Esophagus muscularis mucosa (tissue), 4 donors: ENCODE measurements at regions of chr16 and their contacts with region 1.

Region 1: DNA sequence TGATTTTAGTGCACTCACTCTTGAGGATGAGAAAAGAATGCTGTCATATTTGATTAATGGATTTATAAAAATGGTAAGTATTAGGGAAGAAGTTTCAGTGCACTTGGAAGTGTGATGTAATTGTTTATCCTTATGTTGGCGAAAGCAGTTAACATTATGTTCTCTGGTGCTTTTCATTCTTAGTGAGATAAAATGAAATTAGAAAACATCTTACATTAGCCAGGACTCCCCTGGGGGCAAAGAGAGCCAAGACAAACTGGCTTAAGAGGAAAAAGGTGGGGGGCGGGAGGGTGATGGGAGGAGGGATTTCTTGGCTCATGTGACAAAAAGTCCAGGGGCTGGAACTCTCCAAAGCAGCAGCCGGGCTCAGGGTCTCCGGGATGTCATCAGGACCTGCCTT is 73.2 kb downstream of the KNOP1 start:
- DNase-seq: no peak
- H3K4me3 ChIP-seq: peak overlapping the region; percentile 6 to 25 (median 23)
- H3K27ac ChIP-seq: peak overlapping the region; percentile 73 to 78 (median 74)
- H3K4me1 ChIP-seq: peaks cover 12 to 39% (median 30%) of the 10 kb centered on the region in 4 donors
- H3K27me3 ChIP-seq: no peaks in the 10 kb centered on the region
- CTCF ChIP-seq: no peak
- EP300 ChIP-seq: no peak
- POLR2A ChIP-seq: no peak

Region 2: GRCh38 chr16:19621445-19621844 is 23.4 kb before region 1 on chr16:
- intact Hi-C with region 1: no loop called
- DNase-seq: no peak
- H3K4me3 ChIP-seq: no peak overlapping the region
- H3K27ac ChIP-seq: no peak overlapping the region
- H3K4me1 ChIP-seq: no peaks in the 10 kb centered on the region
- H3K27me3 ChIP-seq: no peaks in the 10 kb centered on the region
- CTCF ChIP-seq: no peak
- EP300 ChIP-seq: no peak
- POLR2A ChIP-seq: no peak

Region 3: GRCh38 chr16:19696328-19696727 is 51.5 kb after region 1 on chr16:
- intact Hi-C with region 1: loop called (anchors 5 kb)
- DNase-seq: peak; percentile 95
- H3K4me3 ChIP-seq: no peak overlapping the region
- H3K27ac ChIP-seq: peak overlapping the region; percentile 68 to 72 (median 70)
- H3K4me1 ChIP-seq: peaks cover 54 to 57% (median 55%) of the 10 kb centered on the region in 4 donors
- H3K27me3 ChIP-seq: no peaks in the 10 kb centered on the region
- CTCF ChIP-seq: no peak
- EP300 ChIP-seq: no peak
- POLR2A ChIP-seq: no peak